T-cell (primary cell): ENCODE measurements at regions of chr22 and their contacts with region 1.

Region 1: GRCh38 chr22:28639321-28639720 is 40.3 kb downstream of the TTC28 start:
- DNase-seq: no peak
- ATAC-seq: no peak
- H3K4me3 ChIP-seq: no peak overlapping the region
- H3K4me3 Mint-ChIP-seq: no peak overlapping the region
- H3K27ac ChIP-seq: no peak overlapping the region
- H3K27ac Mint-ChIP-seq: no peak overlapping the region
- H3K4me1 ChIP-seq: no peaks in the 10 kb centered on the region
- H3K4me1 Mint-ChIP-seq: no peaks in the 10 kb centered on the region
- H3K27me3 ChIP-seq: peaks cover 4 to 29% of the 10 kb centered on the region in 2 experiments
- H3K27me3 Mint-ChIP-seq: peaks cover 34 to 50% of the 10 kb centered on the region in 2 donors

Region 2: GRCh38 chr22:28703436-28703835 is 64.1 kb after region 1 on chr22:
- CTCF ChIA-PET with region 1: no interaction called
- POLR2A ChIA-PET with region 1: interaction called in 1 of 2 experiments, 12 read pairs
- DNase-seq: no peak
- ATAC-seq: no peak
- H3K4me3 ChIP-seq: no peak overlapping the region
- H3K4me3 Mint-ChIP-seq: no peak overlapping the region
- H3K27ac ChIP-seq: no peak overlapping the region
- H3K27ac Mint-ChIP-seq: no peak overlapping the region
- H3K4me1 ChIP-seq: no peaks in the 10 kb centered on the region
- H3K4me1 Mint-ChIP-seq: no peaks in the 10 kb centered on the region
- H3K27me3 ChIP-seq: peaks cover 0 to 4% of the 10 kb centered on the region in 2 experiments
- H3K27me3 Mint-ChIP-seq: no peaks in the 10 kb centered on the region

Region 3: GRCh38 chr22:28741758-28742561 is 102.6 kb after region 1 on chr22 and contains the starts of genes CHEK2 and HSCB:
- CTCF ChIA-PET with region 1: no interaction called
- POLR2A ChIA-PET with region 1: no interaction called
- DNase-seq: peak; percentile 88 to 99 (median 96)
- ATAC-seq: peak; percentile 92 to 95 (median 94)
- H3K4me3 ChIP-seq: peak within 1 kb of the TSS; percentile 93 to 95
- H3K4me3 Mint-ChIP-seq: peak within 1 kb of the TSS; percentile 87 to 94 (median 93)
- H3K27ac ChIP-seq: peak within 1 kb of the TSS; percentile 88
- H3K27ac Mint-ChIP-seq: peak within 1 kb of the TSS; percentile 93 to 94
- H3K4me1 ChIP-seq: peaks cover 8 to 18% of the 10 kb centered on the region in 2 experiments
- H3K4me1 Mint-ChIP-seq: peaks cover 26 to 39% (median 29%) of the 10 kb centered on the region in 3 donors
- H3K27me3 ChIP-seq: no peaks in the 10 kb centered on the region
- H3K27me3 Mint-ChIP-seq: no peaks in the 10 kb centered on the region
- total RNA-seq, gene CHEK2: 5.1 to 10.0 (median 7.1) TPM
- total RNA-seq, gene HSCB: 6.9 to 11.9 (median 11.5) TPM